Activated CD8-positive, alpha-beta memory T cell treated with anti-CD3 and anti-CD28 coated beads, Interleukin-2, amount 10 ng/mL, durations not matched to agents 7 days and 5 days (primary cell): ENCODE measurements at regions of chr17 and their contacts with region 1.

Region 1: DNA sequence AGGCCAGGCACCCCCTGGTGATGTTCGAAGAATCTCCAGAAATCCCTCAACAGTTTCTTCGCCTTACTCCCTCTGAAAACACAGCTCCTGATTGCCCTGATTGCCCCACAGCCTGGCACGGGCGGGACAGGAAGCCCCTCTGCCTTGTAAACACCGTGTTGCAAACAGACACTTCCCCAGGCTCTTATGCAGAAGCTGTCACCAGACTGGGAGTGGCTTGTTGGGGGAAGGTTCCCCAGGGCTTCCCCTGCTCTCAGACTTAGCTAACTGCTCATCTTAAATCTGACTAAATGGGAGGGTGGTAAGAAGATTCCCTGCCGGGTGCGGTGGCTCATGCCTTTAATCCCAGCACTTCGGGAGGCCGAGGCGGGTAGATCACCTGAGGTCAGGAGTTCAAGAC is 11.2 kb downstream of the PIK3R5 start:
- DNase-seq: peak; percentile 86
- ATAC-seq: peak; percentile 74
- H3K4me3 Mint-ChIP-seq: peak overlapping the region; percentile 40
- H3K27ac Mint-ChIP-seq: peak overlapping the region; percentile 90
- H3K4me1 Mint-ChIP-seq: peaks cover 94% of the 10 kb centered on the region
- H3K27me3 Mint-ChIP-seq: no peaks in the 10 kb centered on the region

Region 2: DNA sequence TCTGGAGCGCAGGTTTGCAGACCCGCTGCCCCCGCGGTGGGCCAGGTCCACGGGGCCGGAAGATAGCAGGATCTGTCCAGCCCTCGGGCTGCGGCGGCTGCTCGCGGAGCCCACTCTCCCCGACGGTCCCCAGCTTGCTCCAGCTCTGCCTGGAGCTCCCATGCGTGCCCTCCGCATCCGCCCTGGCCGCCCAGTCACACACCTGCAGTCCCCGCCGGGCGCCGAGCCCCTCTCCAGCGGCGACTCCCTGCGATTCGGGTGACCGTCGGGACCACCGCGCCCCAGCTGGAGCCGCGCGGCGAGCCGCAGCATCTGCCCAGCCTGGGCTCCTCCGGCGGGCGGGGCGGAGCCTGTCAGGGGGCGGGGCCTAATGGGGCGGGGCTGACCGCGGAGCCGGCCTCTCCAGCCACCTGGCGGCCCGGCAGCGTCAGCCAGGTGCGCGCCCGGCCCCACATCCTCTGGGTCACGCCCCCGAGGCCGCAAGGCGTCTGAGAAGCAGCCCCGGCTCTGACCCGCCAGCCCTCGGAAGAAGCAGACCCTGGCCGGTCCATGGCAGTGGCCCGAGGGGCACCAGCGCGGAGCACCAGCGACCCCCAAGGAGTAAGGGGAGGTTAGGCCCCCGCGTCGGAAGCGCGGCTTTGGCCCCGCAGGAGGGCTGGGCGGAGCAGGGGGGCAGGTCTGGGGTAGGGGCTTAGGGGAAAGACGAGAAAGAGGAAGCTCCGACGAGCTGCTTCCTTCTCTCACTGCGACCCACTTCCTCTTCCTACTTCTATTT is 11.2 kb after region 1 on chr17 and contains the start of gene PIK3R5:
- CTCF ChIA-PET with region 1: interaction called, 23 read pairs
- DNase-seq: peak; percentile 86
- ATAC-seq: peak; percentile 87
- H3K4me3 Mint-ChIP-seq: peak within 1 kb of the TSS; percentile 97
- H3K27ac Mint-ChIP-seq: peak within 1 kb of the TSS; percentile 97
- H3K4me1 Mint-ChIP-seq: peaks cover 61% of the 10 kb centered on the region
- H3K27me3 Mint-ChIP-seq: no peaks in the 10 kb centered on the region
- total RNA-seq, gene PIK3R5: 48.9 to 51.2 TPM